Activated CD8-positive, alpha-beta memory T cell treated with anti-CD3 and anti-CD28 coated beads, Interleukin-2, amount 10 ng/mL, durations not matched to agents 7 days and 5 days (primary cell): ENCODE measurements at regions of chr6 and their contacts with region 1.

Region 1: DNA sequence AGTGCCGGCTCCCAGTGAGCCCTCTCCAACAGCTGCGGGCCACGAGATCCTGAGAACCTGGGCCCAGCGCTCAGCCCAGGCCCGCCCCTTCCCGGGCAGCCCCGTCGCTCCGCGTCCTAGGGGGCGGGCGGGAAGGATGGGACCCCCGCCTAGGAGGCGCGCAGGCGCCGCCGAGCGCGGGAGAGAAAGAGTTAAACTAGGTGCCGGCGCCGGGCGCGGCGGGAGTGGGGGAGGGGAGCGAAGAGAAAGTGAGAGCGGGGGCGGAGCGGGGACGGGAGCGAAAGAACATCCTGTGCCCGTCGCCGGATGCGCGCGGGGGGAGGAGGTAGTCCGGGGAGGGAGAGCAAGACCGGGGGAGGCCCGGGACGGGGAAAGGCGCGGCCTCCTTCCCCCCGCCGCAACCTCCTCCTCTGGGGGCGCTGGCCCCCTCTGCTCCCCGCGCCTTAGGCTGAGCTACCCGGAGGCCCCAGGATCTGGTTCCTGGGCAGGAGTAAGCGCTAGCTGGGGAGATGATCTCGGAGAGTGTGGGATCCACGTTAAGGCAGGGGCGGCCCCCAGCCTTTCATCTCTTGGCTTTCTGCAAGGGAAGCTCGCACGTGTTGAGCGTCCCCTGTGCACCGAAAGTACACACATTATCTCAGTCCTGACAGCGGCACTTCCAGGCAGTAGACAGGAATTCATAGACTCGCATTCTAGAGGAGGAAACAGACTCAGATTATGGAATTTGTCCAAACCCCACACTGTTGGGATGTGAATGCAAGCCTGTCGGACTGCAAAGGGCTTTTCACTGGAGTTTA is 4.9 kb upstream of the ARMC12 start:
- DNase-seq: peak; percentile 97
- ATAC-seq: peak; percentile 67
- H3K4me3 Mint-ChIP-seq: peak overlapping the region; percentile 84
- H3K27ac Mint-ChIP-seq: peak overlapping the region; percentile 96
- H3K4me1 Mint-ChIP-seq: peaks cover 66% of the 10 kb centered on the region
- H3K27me3 Mint-ChIP-seq: no peaks in the 10 kb centered on the region

Region 2: GRCh38 chr6:35522660-35523658 is 209.0 kb before region 1 on chr6:
- CTCF ChIA-PET with region 1: interaction called, 89 read pairs
- DNase-seq: peak; percentile 88
- ATAC-seq: peak; percentile 91
- H3K4me3 Mint-ChIP-seq: peak overlapping the region; percentile 56
- H3K27ac Mint-ChIP-seq: peak overlapping the region; percentile 73
- H3K4me1 Mint-ChIP-seq: peaks cover 17% of the 10 kb centered on the region
- H3K27me3 Mint-ChIP-seq: peaks cover 5% of the 10 kb centered on the region

Region 3: DNA sequence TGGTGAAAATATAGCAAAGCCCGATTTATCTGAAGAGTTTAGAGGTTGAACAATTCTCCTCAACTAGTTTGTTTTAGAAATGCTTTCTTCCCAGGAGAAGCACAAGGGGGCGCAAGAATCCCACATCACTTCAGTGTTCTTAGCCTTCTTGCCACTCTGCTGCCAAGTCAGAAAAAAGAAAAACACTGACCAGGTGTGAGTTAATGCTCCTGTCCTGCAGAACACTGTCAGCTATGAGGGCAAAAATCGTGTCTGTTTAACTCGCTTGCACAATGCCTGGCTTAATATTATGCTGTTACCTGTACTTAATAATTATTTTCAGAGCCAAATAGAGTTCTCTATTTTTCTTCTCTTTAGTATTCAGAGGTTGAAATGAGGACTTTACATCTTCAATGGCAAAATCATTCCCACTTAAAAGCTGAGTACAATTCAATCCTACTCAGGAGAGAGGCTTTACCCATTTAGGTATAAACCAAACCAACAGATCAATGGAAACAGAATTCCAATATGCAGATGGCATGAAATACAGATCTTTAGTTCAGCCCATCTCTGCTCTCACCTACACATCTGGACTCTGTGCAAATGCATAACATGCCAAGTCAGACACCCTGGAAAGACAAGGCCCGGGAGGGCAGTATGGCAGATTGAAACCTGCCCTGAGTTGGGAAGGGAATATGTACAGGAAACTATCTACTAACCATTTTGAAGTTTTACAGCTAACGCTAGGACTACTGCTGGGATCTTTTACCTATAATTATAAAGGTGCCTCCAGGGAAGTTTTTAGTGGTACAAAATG is 147.8 kb before region 1 on chr6:
- CTCF ChIA-PET with region 1: interaction called, 180 read pairs
- DNase-seq: peak; percentile 81
- ATAC-seq: peak; percentile 74
- H3K4me3 Mint-ChIP-seq: no peak overlapping the region
- H3K27ac Mint-ChIP-seq: peak overlapping the region; percentile 22
- H3K4me1 Mint-ChIP-seq: peaks cover 15% of the 10 kb centered on the region
- H3K27me3 Mint-ChIP-seq: no peaks in the 10 kb centered on the region

Region 4: GRCh38 chr6:35624341-35625070 is 107.4 kb before region 1 on chr6:
- CTCF ChIA-PET with region 1: interaction called, 25 read pairs
- DNase-seq: no peak
- ATAC-seq: no peak
- H3K4me3 Mint-ChIP-seq: no peak overlapping the region
- H3K27ac Mint-ChIP-seq: peak overlapping the region; percentile 2
- H3K4me1 Mint-ChIP-seq: peaks cover 8% of the 10 kb centered on the region
- H3K27me3 Mint-ChIP-seq: no peaks in the 10 kb centered on the region

Region 5: DNA sequence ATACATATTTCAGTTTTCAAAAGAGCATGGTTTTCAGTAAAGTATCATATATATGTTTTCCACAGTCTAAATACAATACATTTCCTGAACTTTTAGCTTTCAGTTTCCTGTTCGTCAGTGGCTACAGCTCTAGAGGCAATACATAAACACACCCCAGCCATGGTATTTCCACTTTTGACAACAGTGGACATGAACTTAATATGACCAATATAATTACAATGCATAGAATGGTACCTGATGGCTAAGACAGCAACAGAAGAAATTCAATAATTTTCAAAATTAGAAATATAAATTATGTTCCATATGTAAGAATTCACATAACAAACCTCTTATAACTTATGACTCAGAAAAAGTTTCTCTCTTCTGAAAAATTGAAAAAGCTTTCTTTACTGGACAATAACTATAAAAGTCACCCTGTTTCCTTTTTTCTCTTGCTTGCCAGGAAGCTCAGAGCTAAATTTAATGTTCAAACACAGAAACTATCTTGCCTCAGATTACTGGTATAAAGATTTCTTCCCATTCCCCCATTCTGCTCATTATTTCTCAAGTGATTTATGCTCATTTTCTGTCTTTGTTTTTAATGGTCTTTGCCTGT is 62.4 kb before region 1 on chr6:
- CTCF ChIA-PET with region 1: interaction called, 27 read pairs
- DNase-seq: no peak
- ATAC-seq: peak; percentile 81
- H3K4me3 Mint-ChIP-seq: peak overlapping the region; percentile 67
- H3K27ac Mint-ChIP-seq: peak overlapping the region; percentile 91
- H3K4me1 Mint-ChIP-seq: peaks cover 39% of the 10 kb centered on the region
- H3K27me3 Mint-ChIP-seq: no peaks in the 10 kb centered on the region